CD4-positive, alpha-beta memory T cell (primary cell): ENCODE measurements at regions of chr9 and their contacts with region 1.

Region 1: DNA sequence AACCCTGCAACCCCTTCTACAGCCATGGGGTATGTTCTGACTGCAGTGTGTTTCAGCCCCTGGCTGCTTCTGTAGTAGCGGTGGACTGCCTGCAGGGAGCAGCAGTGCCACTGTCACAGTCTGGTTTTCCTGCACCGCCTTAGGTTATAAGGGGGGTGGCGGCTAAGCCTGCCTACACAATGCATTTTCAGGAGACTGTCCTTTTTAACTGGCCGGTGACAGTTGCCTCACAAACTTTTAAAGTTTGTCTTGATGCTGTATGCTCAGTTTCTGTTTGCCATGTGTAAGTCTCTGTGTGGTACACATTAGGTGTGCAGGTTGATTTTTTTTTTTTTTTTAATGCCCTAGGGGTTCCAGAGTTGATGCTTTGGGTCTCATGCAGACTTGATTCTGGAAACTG is 53.0 kb downstream of the NUP214 start:
- DNase-seq: peak; percentile 64 to 78 (median 71)
- H3K4me3 ChIP-seq: no peak overlapping the region
- H3K4me3 Mint-ChIP-seq: no peak overlapping the region
- H3K27ac ChIP-seq: no peak overlapping the region
- H3K27ac Mint-ChIP-seq: peak overlapping the region; percentile 11 to 90 (median 79)
- H3K4me1 ChIP-seq: no peaks in the 10 kb centered on the region
- H3K4me1 Mint-ChIP-seq: peaks cover 3 to 14% (median 12%) of the 10 kb centered on the region in 4 donors
- H3K27me3 ChIP-seq: no peaks in the 10 kb centered on the region
- H3K27me3 Mint-ChIP-seq: no peaks in the 10 kb centered on the region

Region 2: DNA sequence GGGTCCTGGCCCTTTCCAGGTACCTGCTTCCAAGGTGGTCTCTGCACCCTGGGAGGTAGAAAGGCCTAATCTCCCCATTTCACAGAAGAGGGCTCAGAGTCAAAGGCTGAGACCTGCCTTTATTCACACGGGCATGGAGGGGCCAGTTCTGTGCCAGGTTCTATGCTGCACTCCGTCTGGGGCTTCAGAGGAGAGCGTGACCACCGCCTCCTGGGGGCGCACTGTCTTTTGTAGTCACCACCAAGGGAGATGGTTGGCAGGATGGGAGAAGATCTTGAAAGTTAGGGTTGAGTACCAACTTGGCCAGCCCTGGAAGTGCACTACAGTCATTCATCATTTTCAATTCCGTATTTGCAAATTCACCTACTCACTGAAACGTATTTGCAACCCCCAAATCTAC is 537.7 kb before region 1 on chr9:
- CTCF ChIA-PET with region 1: no interaction called
- POLR2A ChIA-PET with region 1: no interaction called
- intact Hi-C with region 1: no loop called
- DNase-seq: no peak
- H3K4me3 ChIP-seq: no peak overlapping the region
- H3K4me3 Mint-ChIP-seq: no peak overlapping the region
- H3K27ac ChIP-seq: no peak overlapping the region
- H3K27ac Mint-ChIP-seq: no peak overlapping the region
- H3K4me1 ChIP-seq: no peaks in the 10 kb centered on the region
- H3K4me1 Mint-ChIP-seq: no peaks in the 10 kb centered on the region
- H3K27me3 ChIP-seq: no peaks in the 10 kb centered on the region
- H3K27me3 Mint-ChIP-seq: no peaks in the 10 kb centered on the region

Region 3: DNA sequence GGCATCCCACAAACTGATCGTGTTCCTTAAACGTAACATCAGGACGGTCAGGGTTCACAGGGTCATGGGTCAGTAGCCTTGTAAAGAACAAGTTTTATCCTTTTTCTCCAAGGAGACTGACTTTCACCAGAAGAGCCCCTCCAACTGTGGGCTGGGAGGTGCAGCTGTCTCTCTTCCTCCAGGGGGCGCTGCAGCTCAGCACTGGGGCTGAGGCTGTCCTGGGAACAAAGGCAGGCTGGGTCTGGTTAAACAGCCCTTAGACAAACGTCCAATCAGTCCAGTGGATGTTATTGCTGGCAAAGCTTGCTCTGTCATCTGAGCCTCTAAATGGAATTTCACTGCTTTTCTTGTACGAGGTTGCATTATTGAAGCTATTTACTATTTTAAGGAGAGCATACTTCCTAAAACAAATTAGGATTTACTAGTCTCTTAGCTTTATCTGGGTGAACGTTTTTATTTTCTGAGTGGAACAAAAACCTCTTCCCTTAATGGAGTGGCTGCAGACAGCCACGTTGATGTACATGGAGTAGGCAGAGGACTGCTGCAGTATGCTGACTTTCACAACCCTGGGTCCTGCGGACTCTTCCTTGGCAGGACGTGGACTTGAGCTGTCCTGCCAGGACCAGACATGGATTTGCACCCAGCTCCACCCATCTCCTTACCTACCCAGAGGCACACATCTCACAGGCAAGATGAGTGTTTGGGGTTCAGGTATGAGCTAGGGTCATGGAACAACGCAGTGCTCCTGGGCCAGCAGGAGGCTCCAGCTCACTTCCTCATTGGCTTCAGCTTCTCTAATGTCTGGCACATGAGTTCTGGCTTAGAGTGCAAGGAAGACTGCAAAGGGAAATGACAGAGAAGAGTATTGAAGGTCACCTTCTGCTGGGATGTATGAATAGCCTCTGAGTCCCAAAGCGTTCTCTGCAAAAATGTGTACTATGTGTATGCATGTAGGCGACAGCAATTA is 477.0 kb before region 1 on chr9:
- CTCF ChIA-PET with region 1: no interaction called
- POLR2A ChIA-PET with region 1: no interaction called
- intact Hi-C with region 1: no loop called
- DNase-seq: peak; percentile 57 to 68 (median 59)
- H3K4me3 ChIP-seq: no peak overlapping the region
- H3K4me3 Mint-ChIP-seq: no peak overlapping the region
- H3K27ac ChIP-seq: no peak overlapping the region
- H3K27ac Mint-ChIP-seq: no peak overlapping the region
- H3K4me1 ChIP-seq: peaks cover 3% of the 10 kb centered on the region
- H3K4me1 Mint-ChIP-seq: peaks cover 11 to 21% (median 14%) of the 10 kb centered on the region in 4 donors
- H3K27me3 ChIP-seq: no peaks in the 10 kb centered on the region
- H3K27me3 Mint-ChIP-seq: no peaks in the 10 kb centered on the region

Region 4: DNA sequence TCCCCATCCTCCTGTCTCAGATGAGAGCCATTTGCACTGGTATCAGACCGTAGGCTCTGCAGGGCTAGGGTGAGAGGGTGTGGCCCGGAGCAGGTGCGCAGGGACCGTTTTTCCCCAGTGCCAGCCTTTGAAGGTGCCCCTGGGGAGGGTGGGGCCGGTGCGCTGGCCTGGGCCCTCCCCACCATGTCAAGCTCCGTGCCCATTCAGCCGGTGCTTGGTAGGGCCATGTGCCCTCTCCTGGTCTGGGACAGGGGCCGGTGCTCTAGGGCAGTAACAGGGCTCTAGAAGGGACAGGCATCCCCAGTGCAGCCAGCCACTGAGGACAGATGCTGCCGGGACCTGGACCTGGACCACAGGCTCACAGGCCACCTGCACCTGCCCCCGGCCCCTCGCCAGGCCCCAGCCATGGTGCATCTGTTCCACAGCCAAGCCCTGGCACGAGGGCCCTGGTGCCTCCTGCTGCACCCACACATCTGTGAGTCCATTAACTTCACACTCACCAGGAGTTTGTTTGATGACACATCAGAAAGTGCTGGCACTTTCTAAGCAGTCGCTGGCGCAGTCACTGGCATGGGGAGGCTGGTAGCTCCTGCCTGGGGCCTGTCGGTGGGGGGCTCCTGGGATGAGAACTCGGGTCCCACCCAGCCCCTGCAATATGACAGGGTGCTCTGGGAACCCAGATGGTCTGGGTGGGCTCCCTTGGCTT is 276.7 kb before region 1 on chr9:
- CTCF ChIA-PET with region 1: no interaction called
- POLR2A ChIA-PET with region 1: no interaction called
- intact Hi-C with region 1: no loop called
- DNase-seq: no peak
- H3K4me3 ChIP-seq: no peak overlapping the region
- H3K4me3 Mint-ChIP-seq: no peak overlapping the region
- H3K27ac ChIP-seq: no peak overlapping the region
- H3K27ac Mint-ChIP-seq: no peak overlapping the region
- H3K4me1 ChIP-seq: no peaks in the 10 kb centered on the region
- H3K4me1 Mint-ChIP-seq: no peaks in the 10 kb centered on the region
- H3K27me3 ChIP-seq: no peaks in the 10 kb centered on the region
- H3K27me3 Mint-ChIP-seq: peaks cover 0 to 2% of the 10 kb centered on the region in 2 donors

Region 5: DNA sequence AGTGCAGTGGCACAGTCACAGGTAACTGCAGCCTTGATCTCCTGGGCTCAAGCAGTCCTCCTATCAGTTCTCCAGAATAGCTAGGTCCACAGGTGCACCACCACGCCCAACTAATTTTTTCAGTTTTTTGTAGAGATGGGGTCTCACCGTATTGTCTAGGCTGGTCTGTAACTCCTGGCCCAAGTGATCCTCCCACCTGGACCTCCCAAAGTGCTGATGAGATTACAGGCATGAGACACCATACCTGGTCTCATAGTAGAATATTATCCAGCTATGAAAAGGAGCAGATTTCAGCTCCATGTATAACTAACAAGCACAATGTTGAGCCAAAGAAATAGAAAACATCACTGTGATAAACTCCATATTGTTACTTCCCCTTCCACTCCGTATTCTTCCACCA is 28.1 kb after region 1 on chr9:
- CTCF ChIA-PET with region 1: interaction called, 13 read pairs
- POLR2A ChIA-PET with region 1: no interaction called
- intact Hi-C with region 1: no loop called
- DNase-seq: no peak
- H3K4me3 ChIP-seq: no peak overlapping the region
- H3K4me3 Mint-ChIP-seq: no peak overlapping the region
- H3K27ac ChIP-seq: no peak overlapping the region
- H3K27ac Mint-ChIP-seq: peak overlapping the region in 1 of 7 donors; percentile 36
- H3K4me1 ChIP-seq: no peaks in the 10 kb centered on the region
- H3K4me1 Mint-ChIP-seq: peaks cover 0 to 2% (median 0%) of the 10 kb centered on the region in 4 donors
- H3K27me3 ChIP-seq: no peaks in the 10 kb centered on the region
- H3K27me3 Mint-ChIP-seq: no peaks in the 10 kb centered on the region

Region 6: GRCh38 chr9:131237931-131238401 is 59.6 kb after region 1 on chr9:
- CTCF ChIA-PET with region 1: interaction called, 14 read pairs
- POLR2A ChIA-PET with region 1: no interaction called
- intact Hi-C with region 1: loop called (anchors 10 kb)
- DNase-seq: peak; percentile 84 to 89 (median 85)
- H3K4me3 ChIP-seq: peak overlapping the region in 1 of 2 donors; percentile 34
- H3K4me3 Mint-ChIP-seq: peak overlapping the region; percentile 77 to 87 (median 83)
- H3K27ac ChIP-seq: peak overlapping the region; percentile 42
- H3K27ac Mint-ChIP-seq: peak overlapping the region; percentile 84 to 98 (median 96)
- H3K4me1 ChIP-seq: peaks cover 65% of the 10 kb centered on the region
- H3K4me1 Mint-ChIP-seq: peaks cover 32 to 68% (median 49%) of the 10 kb centered on the region in 4 donors
- H3K27me3 ChIP-seq: no peaks in the 10 kb centered on the region
- H3K27me3 Mint-ChIP-seq: no peaks in the 10 kb centered on the region

Region 7: GRCh38 chr9:131253891-131254491 is 75.6 kb after region 1 on chr9:
- CTCF ChIA-PET with region 1: interaction called, 11 read pairs
- POLR2A ChIA-PET with region 1: interaction called, 5 read pairs
- intact Hi-C with region 1: no loop called
- DNase-seq: no peak
- H3K4me3 ChIP-seq: no peak overlapping the region
- H3K4me3 Mint-ChIP-seq: peak overlapping the region in 7 of 8 donors; percentile 27 to 91 (median 46)
- H3K27ac ChIP-seq: peak overlapping the region; percentile 77
- H3K27ac Mint-ChIP-seq: peak overlapping the region; percentile 57 to 100 (median 72)
- H3K4me1 ChIP-seq: peaks cover 72% of the 10 kb centered on the region
- H3K4me1 Mint-ChIP-seq: peaks cover 27 to 73% (median 50%) of the 10 kb centered on the region in 4 donors
- H3K27me3 ChIP-seq: no peaks in the 10 kb centered on the region
- H3K27me3 Mint-ChIP-seq: no peaks in the 10 kb centered on the region

Region 8: DNA sequence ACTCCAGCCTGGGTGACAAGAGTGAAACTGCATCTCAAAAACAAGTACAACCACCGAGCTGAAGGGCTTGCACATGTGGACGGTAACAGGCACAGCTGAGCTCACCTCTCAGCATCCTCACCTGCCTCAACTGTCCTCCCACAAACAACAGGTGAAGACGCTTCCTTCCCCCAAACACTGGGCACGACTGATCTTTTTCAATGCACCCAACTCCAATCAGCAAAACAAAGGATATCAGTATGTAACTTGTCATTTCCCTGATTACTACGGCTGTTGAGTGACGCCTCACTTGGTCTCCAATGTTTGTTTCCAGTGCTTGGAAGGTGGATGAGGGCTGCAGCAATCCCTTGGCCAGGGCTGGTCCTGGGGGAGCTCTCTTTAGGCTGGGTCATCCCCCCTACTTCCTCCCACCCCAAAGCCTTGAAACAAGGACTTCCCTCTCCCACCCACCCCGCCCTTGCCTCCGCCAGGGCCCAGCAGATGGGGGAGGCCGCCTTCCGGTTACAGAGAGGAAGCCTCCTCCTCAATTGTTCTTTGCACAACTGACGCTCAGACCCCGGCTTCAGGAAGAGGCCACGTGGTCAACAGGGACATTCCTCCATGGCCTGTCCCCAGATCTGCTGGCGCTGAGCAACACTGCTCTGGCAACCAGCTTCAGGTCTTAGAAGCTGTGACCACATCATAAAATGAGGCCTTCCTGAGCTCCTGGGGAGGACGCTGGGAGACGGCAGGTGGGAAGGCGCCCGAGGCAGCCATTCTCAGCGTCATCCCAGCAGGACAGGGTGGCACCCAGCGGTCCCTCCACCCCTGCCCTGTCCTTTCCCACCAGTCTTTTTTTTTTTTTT is 92.0 kb after region 1 on chr9:
- CTCF ChIA-PET with region 1: interaction called, 13 read pairs
- POLR2A ChIA-PET with region 1: interaction called, 3 read pairs
- intact Hi-C with region 1: loop called (anchors 1 kb)
- DNase-seq: peak; percentile 49 to 76 (median 55)
- H3K4me3 ChIP-seq: peak overlapping the region; percentile 31 to 91
- H3K4me3 Mint-ChIP-seq: peak overlapping the region; percentile 96 to 100 (median 99)
- H3K27ac ChIP-seq: peak overlapping the region; percentile 72
- H3K27ac Mint-ChIP-seq: peak overlapping the region; percentile 93 to 99 (median 96)
- H3K4me1 ChIP-seq: peaks cover 63% of the 10 kb centered on the region
- H3K4me1 Mint-ChIP-seq: peaks cover 39 to 84% (median 52%) of the 10 kb centered on the region in 4 donors
- H3K27me3 ChIP-seq: no peaks in the 10 kb centered on the region
- H3K27me3 Mint-ChIP-seq: no peaks in the 10 kb centered on the region

Region 9: DNA sequence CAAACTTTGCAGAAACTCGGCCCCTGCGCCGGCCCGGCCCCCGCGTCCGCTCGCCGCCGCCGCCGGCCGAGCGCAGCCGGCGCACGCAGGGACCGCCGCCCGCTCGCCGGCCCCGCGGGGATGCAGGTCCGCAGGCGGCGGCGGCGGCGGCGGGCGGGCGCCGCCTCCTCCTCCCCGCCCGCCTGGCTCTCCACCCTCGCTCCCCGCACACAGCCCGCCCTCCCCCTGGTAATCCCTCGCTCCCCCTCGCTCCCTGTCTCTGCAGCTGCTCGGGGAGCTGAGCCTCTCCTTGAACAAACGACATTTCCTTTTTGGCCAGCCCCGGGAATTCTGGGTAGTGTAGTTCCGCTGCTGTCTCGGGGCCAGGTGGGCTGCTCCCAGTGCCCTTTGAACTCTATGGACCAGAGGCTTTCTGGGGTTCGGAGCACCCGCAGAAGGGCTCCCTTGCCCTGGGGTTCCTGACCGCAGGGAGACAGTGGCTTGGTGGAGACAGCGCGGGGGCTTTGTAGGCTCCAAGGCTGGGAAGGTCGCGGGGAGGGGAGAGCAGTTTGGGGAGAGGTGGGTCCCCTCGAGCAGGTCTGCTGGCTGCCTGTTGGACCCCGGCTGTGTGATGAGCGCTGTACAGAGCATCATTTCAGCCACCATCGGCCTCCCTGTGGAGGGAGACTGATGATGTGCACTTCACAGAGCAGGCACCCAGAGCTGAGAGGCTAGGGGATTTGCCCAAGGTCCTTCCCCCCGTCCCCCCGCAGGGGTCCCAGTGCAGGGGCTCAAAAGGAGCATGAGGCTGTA is 99.7 kb after region 1 on chr9:
- CTCF ChIA-PET with region 1: interaction called, 6 read pairs
- POLR2A ChIA-PET with region 1: interaction called, 5 read pairs
- intact Hi-C with region 1: loop called (anchors 1 kb)
- DNase-seq: peak; percentile 60 to 78 (median 61)
- H3K4me3 ChIP-seq: peak overlapping the region; percentile 21 to 65
- H3K4me3 Mint-ChIP-seq: peak overlapping the region; percentile 84 to 93 (median 91)
- H3K27ac ChIP-seq: peak overlapping the region; percentile 79
- H3K27ac Mint-ChIP-seq: peak overlapping the region; percentile 92 to 95 (median 94)
- H3K4me1 ChIP-seq: peaks cover 27% of the 10 kb centered on the region
- H3K4me1 Mint-ChIP-seq: peaks cover 22 to 49% (median 25%) of the 10 kb centered on the region in 4 donors
- H3K27me3 ChIP-seq: no peaks in the 10 kb centered on the region
- H3K27me3 Mint-ChIP-seq: peaks cover 2 to 3% of the 10 kb centered on the region in 2 donors

Region 10: GRCh38 chr9:131349881-131350563 is 171.6 kb after region 1 on chr9:
- CTCF ChIA-PET with region 1: interaction called, 16 read pairs
- POLR2A ChIA-PET with region 1: no interaction called
- intact Hi-C with region 1: no loop called
- DNase-seq: peak; percentile 79 to 82 (median 81)
- H3K4me3 ChIP-seq: no peak overlapping the region
- H3K4me3 Mint-ChIP-seq: peak overlapping the region in 4 of 8 donors; percentile 36 to 63 (median 50)
- H3K27ac ChIP-seq: no peak overlapping the region
- H3K27ac Mint-ChIP-seq: peak overlapping the region in 3 of 7 donors; percentile 30 to 91 (median 42)
- H3K4me1 ChIP-seq: peaks cover 9% of the 10 kb centered on the region
- H3K4me1 Mint-ChIP-seq: peaks cover 0 to 12% (median 6%) of the 10 kb centered on the region in 4 donors
- H3K27me3 ChIP-seq: no peaks in the 10 kb centered on the region
- H3K27me3 Mint-ChIP-seq: peaks cover 0 to 4% of the 10 kb centered on the region in 2 donors

Region 11: GRCh38 chr9:131502781-131503625 is 324.6 kb after region 1 on chr9 and contains the start of gene POMT1:
- CTCF ChIA-PET with region 1: no interaction called
- POLR2A ChIA-PET with region 1: no interaction called
- intact Hi-C with region 1: no loop called
- DNase-seq: peak; percentile 90 to 91 (median 91)
- H3K4me3 ChIP-seq: peak within 1 kb of the TSS; percentile 74 to 86
- H3K4me3 Mint-ChIP-seq: peak within 1 kb of the TSS; percentile 92 to 98 (median 94)
- H3K27ac ChIP-seq: peak within 1 kb of the TSS; percentile 74
- H3K27ac Mint-ChIP-seq: peak within 1 kb of the TSS; percentile 79 to 97 (median 92)
- H3K4me1 ChIP-seq: peaks cover 67% of the 10 kb centered on the region
- H3K4me1 Mint-ChIP-seq: peaks cover 44 to 79% (median 56%) of the 10 kb centered on the region in 4 donors
- H3K27me3 ChIP-seq: no peaks in the 10 kb centered on the region
- H3K27me3 Mint-ChIP-seq: no peaks in the 10 kb centered on the region
- total RNA-seq, gene POMT1: 52.1 to 58.5 TPM